ENCODE measurements at regions of chr10 and their contacts with region 1.

Region 1: DNA sequence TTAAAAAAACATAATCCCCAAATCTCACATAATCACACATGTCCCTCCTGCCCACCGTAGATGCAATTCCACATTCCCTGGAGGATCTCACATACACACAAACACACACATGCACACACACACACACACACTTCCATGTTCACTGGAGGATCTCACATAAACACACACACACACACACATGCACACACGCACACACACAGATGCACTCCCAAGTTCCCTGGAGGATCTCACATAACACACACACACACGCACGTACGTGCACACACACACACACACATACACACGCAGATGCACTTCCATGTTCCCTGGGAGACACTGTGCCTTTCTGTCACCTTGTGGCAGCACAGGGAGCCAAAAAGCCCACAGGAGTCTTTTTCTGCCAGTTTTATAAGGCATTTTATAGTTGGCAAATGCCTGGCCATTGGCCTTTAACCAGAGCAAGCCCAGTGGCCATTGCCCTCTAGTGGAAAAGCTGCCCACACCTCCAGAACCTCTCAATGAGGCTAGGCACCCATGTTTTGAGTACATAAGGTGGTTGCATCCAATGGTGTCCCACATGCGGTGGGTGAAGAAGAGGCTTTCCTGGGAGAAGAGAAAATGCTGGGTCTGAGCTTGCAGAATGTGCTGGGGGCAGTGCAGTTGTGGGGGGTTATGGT is 115.4 kb upstream of the ACBD5 start:
- ATAC-seq: no peak
- H3K4me3 ChIP-seq: no peak overlapping the region
- H3K27ac ChIP-seq: no peak overlapping the region
- H3K4me1 ChIP-seq: peaks cover 2 to 8% of the 10 kb centered on the region in 2 donors

Region 2: DNA sequence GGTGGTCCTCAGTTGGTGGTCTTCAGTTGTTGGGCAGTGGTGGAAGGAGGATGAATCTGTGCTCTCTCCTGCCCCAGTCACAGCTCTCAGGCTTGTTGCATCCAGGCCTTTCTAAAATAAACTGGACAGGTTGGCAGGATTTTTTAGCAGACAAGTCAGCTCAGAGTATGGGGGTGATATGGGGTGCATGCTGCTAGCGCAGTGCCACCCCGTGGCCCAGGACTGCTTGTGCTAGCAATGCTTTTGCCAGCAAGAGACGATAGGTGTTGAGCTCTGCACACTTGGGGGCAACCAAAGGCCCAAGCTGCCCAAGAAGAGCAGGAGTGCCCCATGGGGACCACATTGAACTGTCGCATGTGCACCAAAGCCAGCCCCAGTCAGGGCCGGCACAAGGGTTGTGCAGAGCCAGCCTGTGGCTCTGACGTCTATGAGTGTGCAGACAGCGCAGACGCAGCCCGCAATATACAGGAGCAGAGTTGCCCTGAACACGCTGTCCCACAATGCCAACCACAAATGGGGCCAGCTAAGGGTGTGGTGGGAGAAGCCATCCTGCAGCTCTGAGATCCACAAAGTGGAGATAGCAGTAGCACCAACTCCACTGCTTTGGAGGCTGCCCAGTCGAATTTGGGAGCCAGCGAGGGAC is 708.3 kb before region 1 on chr10:
- in situ Hi-C with region 1: no loop called
- ATAC-seq: no peak
- H3K4me3 ChIP-seq: no peak overlapping the region
- H3K27ac ChIP-seq: no peak overlapping the region
- H3K4me1 ChIP-seq: no peaks in the 10 kb centered on the region

Region 3: GRCh38 chr10:26890956-26891355 is 465.1 kb before region 1 on chr10:
- in situ Hi-C with region 1: loop called in 1 of 9 experiments (anchors 10 kb)
- ATAC-seq: peak in 6 of 8 experiments; percentile 32 to 97 (median 78)
- H3K4me3 ChIP-seq: no peak overlapping the region
- H3K27ac ChIP-seq: no peak overlapping the region
- H3K4me1 ChIP-seq: no peaks in the 10 kb centered on the region